ENCODE measurements at regions of chr13 and their contacts with region 1.

Region 1: GRCh38 chr13:23268441-23268840 is 87.7 kb downstream of the SGCG start:
- DNase-seq: no peak
- ATAC-seq: peak in 1 of 4 donors; percentile 43
- H3K4me3 ChIP-seq: no peak overlapping the region
- H3K27ac ChIP-seq: no peak overlapping the region
- H3K4me1 ChIP-seq: no peaks in the 10 kb centered on the region
- H3K27me3 ChIP-seq: no peaks in the 10 kb centered on the region
- CTCF ChIP-seq: no peak

Region 2: GRCh38 chr13:21723807-21724505 is 1544.5 kb before region 1 on chr13:
- intact Hi-C with region 1: loop called in 1 of 2 experiments (anchors 10 kb)
- DNase-seq: no peak
- ATAC-seq: no peak
- H3K4me3 ChIP-seq: no peak overlapping the region
- H3K27ac ChIP-seq: no peak overlapping the region
- H3K4me1 ChIP-seq: no peaks in the 10 kb centered on the region
- H3K27me3 ChIP-seq: no peaks in the 10 kb centered on the region
- CTCF ChIP-seq: no peak

Region 3: GRCh38 chr13:23202383-23202782 is 66.1 kb before region 1 on chr13:
- intact Hi-C with region 1: no loop called
- DNase-seq: no peak
- ATAC-seq: peak in 3 of 4 donors; percentile 73 to 81 (median 78)
- H3K4me3 ChIP-seq: no peak overlapping the region
- H3K27ac ChIP-seq: peak overlapping the region; percentile 17
- H3K4me1 ChIP-seq: peaks cover 9% of the 10 kb centered on the region
- H3K27me3 ChIP-seq: no peaks in the 10 kb centered on the region
- CTCF ChIP-seq: no peak